ENCODE measurements at regions of chr20 and their contacts with region 1.

Region 1: GRCh38 chr20:62156592-62157386 is 13.2 kb downstream of the SS18L1 start:
- DNase-seq: peak; percentile 86
- ATAC-seq: peak; percentile 85
- H3K4me3 Mint-ChIP-seq: no peak overlapping the region
- H3K27ac Mint-ChIP-seq: no peak overlapping the region
- H3K4me1 Mint-ChIP-seq: peaks cover 15% of the 10 kb centered on the region
- H3K27me3 Mint-ChIP-seq: no peaks in the 10 kb centered on the region

Region 2: GRCh38 chr20:62010551-62011402 is 146.0 kb before region 1 on chr20:
- CTCF ChIA-PET with region 1: interaction called, 10 read pairs
- POLR2A ChIA-PET with region 1: no interaction called
- intact Hi-C with region 1: loop called (anchors 1 to 2 kb)
- DNase-seq: peak; percentile 75
- ATAC-seq: peak; percentile 81
- H3K4me3 Mint-ChIP-seq: no peak overlapping the region
- H3K27ac Mint-ChIP-seq: peak overlapping the region; percentile 29
- H3K4me1 Mint-ChIP-seq: peaks cover 3% of the 10 kb centered on the region
- H3K27me3 Mint-ChIP-seq: no peaks in the 10 kb centered on the region

Region 3: GRCh38 chr20:62327726-62328495 is 171.1 kb after region 1 on chr20:
- CTCF ChIA-PET with region 1: no interaction called
- POLR2A ChIA-PET with region 1: no interaction called
- intact Hi-C with region 1: no loop called
- DNase-seq: no peak
- ATAC-seq: no peak
- H3K4me3 Mint-ChIP-seq: no peak overlapping the region
- H3K27ac Mint-ChIP-seq: no peak overlapping the region
- H3K4me1 Mint-ChIP-seq: no peaks in the 10 kb centered on the region
- H3K27me3 Mint-ChIP-seq: no peaks in the 10 kb centered on the region